Ovary (tissue), 10 donors: ENCODE measurements at regions of chr1 and their contacts with region 1.

Region 1: DNA sequence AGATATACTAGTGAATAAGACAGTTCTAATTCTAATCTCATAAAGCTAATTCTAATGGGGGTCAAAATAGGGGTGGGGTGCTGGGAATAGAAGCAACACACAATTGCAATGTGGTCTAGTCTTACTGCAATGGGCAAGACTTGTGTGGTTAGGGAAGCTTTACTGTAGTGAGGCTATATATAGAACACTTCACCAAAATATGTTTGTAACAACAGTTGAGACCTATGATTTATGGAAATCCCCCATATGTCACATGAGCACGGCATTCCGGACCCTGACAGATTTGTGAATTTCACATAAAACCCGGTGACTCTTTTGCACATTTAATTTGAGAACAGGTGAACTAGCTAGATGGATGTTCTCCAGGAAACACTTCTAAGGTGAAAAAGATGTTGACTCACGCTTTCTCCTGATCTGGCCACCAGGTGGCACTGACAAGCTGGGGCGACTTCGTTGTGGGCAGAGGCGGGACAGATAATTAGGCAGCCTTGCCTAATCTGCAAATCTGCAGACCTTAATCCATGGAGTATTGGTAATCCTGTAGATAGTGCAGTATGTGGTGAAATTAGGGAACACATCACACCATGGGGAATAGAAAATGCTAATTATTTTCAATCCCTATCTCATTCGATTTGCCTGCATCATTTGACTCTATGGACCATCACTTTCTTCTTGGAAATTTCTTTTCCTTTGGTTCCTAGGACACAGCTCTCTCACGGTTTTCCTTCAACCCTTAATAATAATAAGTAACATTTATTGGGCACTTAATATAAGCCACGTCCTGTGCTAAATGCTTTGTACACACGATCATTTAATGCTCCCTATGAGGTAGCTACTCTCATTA is 37.7 kb downstream of the KIAA0040 start:
- DNase-seq: peak; percentile 26 to 66 (median 61)
- H3K4me3 ChIP-seq: no peak overlapping the region
- H3K27ac ChIP-seq: no peak overlapping the region
- H3K4me1 ChIP-seq: no peaks in the 10 kb centered on the region
- H3K27me3 ChIP-seq: no peaks in the 10 kb centered on the region
- CTCF ChIP-seq: peak; percentile 26 to 54 (median 32)
- EP300 ChIP-seq: no peak
- POLR2A ChIP-seq: no peak

Region 2: DNA sequence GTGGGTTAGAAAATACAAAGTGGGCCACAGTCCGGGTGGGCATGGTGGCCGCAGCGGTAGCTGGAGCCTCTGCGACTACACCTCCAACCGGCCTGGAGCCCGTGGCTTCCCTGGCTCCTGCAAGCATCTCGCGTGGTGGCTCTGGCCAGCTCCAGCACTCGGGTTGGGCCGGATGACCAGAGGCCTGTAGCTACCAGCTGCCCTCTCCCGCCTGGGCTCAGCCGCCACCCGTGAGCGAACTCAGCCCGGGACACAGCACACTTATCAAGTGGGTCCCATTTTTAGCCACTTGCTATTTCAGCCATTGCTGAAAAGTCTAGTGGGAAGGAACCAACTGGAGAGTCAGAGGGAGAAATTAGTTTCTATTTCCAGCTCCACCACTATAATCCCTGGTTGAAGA is 262.8 kb before region 1 on chr1:
- intact Hi-C with region 1: no loop called
- DNase-seq: no peak
- H3K4me3 ChIP-seq: no peak overlapping the region
- H3K27ac ChIP-seq: no peak overlapping the region
- H3K4me1 ChIP-seq: no peaks in the 10 kb centered on the region
- H3K27me3 ChIP-seq: no peaks in the 10 kb centered on the region
- CTCF ChIP-seq: no peak
- EP300 ChIP-seq: no peak
- POLR2A ChIP-seq: no peak

Region 3: GRCh38 chr1:175319418-175320230 is 164.8 kb after region 1 on chr1:
- intact Hi-C with region 1: loop called (anchors 2 to 5 kb)
- DNase-seq: peak; percentile 30 to 68 (median 63)
- H3K4me3 ChIP-seq: no peak overlapping the region
- H3K27ac ChIP-seq: no peak overlapping the region
- H3K4me1 ChIP-seq: no peaks in the 10 kb centered on the region
- H3K27me3 ChIP-seq: no peaks in the 10 kb centered on the region
- CTCF ChIP-seq: peak; percentile 31 to 62 (median 41)
- EP300 ChIP-seq: no peak
- POLR2A ChIP-seq: no peak

Region 4: GRCh38 chr1:175433532-175434282 is 278.9 kb after region 1 on chr1:
- intact Hi-C with region 1: no loop called
- DNase-seq: no peak
- H3K4me3 ChIP-seq: no peak overlapping the region
- H3K27ac ChIP-seq: no peak overlapping the region
- H3K4me1 ChIP-seq: no peaks in the 10 kb centered on the region
- H3K27me3 ChIP-seq: no peaks in the 10 kb centered on the region
- CTCF ChIP-seq: no peak
- EP300 ChIP-seq: no peak
- POLR2A ChIP-seq: no peak

Region 5: DNA sequence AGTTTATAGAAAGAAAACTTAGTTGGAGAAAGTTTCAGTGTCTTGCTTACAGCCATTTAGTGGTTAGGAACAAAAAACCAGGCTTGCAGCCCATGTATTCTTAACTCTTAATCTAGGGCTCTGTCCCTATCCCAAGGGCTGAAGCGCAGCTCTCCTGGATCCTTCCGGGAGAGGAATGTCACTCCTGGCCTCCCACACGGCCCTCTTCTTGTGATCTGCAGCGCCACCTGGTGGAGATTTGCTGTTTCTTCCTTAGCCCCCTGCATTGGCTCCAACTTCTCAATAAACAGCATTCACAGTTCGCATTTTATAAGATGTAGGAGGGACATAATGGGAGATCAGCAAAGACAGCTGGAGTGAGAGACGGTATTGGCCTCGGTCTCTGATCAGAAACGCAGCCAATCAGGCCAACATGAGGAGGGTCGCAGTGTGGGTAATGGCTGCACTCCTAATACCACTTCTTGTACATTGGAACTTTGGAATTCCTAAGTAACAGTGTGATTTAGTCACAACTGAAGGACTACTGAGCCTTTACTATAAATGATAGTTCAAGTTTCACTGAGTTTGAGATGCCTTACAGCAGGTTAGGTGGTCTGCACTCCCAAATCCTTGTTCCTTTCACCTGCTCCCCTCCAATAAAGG is 1726.2 kb after region 1 on chr1:
- intact Hi-C with region 1: loop called in 1 of 4 experiments (anchors 10 kb)
- DNase-seq: peak; percentile 47 to 69 (median 61)
- H3K4me3 ChIP-seq: no peak overlapping the region
- H3K27ac ChIP-seq: no peak overlapping the region
- H3K4me1 ChIP-seq: no peaks in the 10 kb centered on the region
- H3K27me3 ChIP-seq: no peaks in the 10 kb centered on the region
- CTCF ChIP-seq: peak in 2 of 3 donors; percentile 28 to 60
- EP300 ChIP-seq: no peak
- POLR2A ChIP-seq: no peak